A549 (cell line): ENCODE measurements at regions of chr2 and their contacts with region 1.

Region 1: GRCh38 chr2:100242891-100243619 is 79.2 kb downstream of the LONRF2 start:
- DNase-seq: peak; percentile 43 to 51
- ATAC-seq: peak; percentile 80 to 90; a peak in 5 of 6 replicates
- H3K4me3 ChIP-seq: no peak overlapping the region
- H3K27ac ChIP-seq: no peak overlapping the region
- H3K4me1 ChIP-seq: no peaks in the 10 kb centered on the region
- CTCF ChIP-seq: peak; percentile 76
- EP300 ChIP-seq: no peak
- POLR2A ChIP-seq: no peak
- RAD21 ChIP-seq: peak; percentile 86 to 90

Region 2: DNA sequence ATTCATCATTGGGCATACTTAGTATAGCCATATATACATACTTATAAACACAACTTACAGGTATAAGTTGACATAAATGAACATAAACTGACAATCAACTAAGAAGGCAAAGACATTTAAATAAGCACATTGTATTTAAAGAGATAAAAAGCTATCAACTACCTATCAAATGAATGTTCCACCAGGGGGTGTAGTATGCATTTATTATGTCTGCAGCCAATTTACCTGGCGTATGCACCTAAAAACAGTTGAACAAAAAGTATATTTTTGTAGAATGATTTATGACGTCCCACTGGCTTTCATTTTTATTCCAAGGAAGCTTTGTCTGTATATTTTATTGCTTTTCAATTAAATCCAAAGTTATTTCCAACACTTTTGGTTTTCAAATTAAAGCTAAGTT is 424.2 kb before region 1 on chr2:
- CTCF ChIA-PET with region 1: interaction called, 22 read pairs
- POLR2A ChIA-PET with region 1: no interaction called
- DNase-seq: peak; percentile 8 to 16
- ATAC-seq: no peak
- H3K4me3 ChIP-seq: no peak overlapping the region
- H3K27ac ChIP-seq: no peak overlapping the region
- H3K4me1 ChIP-seq: no peaks in the 10 kb centered on the region
- CTCF ChIP-seq: peak; percentile 35; the same call in 1 of the 3 replicates
- EP300 ChIP-seq: no peak
- POLR2A ChIP-seq: no peak
- RAD21 ChIP-seq: peak; percentile 28 to 43; a peak in 3 of 5 replicates

Region 3: GRCh38 chr2:100321181-100321865 is 78.3 kb after region 1 on chr2:
- CTCF ChIA-PET with region 1: no interaction called
- POLR2A ChIA-PET with region 1: no interaction called
- DNase-seq: peak; percentile 40 to 77
- ATAC-seq: peak; percentile 81 to 86
- H3K4me3 ChIP-seq: peak overlapping the region; percentile 88
- H3K27ac ChIP-seq: peak overlapping the region; percentile 92 to 94
- H3K4me1 ChIP-seq: peaks cover 14% of the 10 kb centered on the region; the same call in 1 of the 3 replicates
- CTCF ChIP-seq: peak; percentile 26; the same call in 1 of the 3 replicates
- EP300 ChIP-seq: no peak
- POLR2A ChIP-seq: peak; percentile 66
- RAD21 ChIP-seq: no peak